B cell (primary cell): ENCODE measurements at regions of chr3 and their contacts with region 1.

Region 1: GRCh38 chr3:45656575-45657363 is 32.4 kb upstream of the SACM1L start:
- DNase-seq: peak; percentile 88
- ATAC-seq: peak; percentile 89
- H3K4me3 ChIP-seq: no peak overlapping the region
- H3K4me3 Mint-ChIP-seq: no peak overlapping the region
- H3K27ac ChIP-seq: no peak overlapping the region
- H3K27ac Mint-ChIP-seq: peak overlapping the region; percentile 53
- H3K4me1 ChIP-seq: peaks cover 20 to 21% of the 10 kb centered on the region in 2 donors
- H3K4me1 Mint-ChIP-seq: peaks cover 49% of the 10 kb centered on the region
- H3K27me3 ChIP-seq: no peaks in the 10 kb centered on the region
- H3K27me3 Mint-ChIP-seq: no peaks in the 10 kb centered on the region
- CTCF ChIP-seq: peak; percentile 91

Region 2: DNA sequence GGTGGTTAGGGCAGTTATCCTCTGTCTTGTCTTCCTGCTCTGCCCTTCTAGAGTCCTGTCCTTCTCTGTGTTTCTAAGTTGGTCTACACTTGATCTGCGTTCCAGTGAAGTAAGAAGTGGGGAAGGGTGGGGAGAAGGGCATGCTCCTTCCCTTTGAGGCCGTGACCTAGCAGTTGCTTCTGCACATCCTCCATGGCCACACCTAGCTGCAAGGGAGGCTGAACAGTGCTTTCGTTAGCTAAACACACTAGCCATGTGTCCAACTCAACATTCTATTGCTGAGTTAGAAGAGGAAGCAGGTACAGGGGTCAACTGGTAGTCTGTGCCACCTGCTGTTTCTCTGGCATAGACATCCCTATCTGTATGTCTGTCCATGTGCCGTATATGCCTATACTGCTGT is 173.9 kb before region 1 on chr3:
- CTCF ChIA-PET with region 1: no interaction called
- POLR2A ChIA-PET with region 1: no interaction called
- intact Hi-C with region 1: no loop called
- DNase-seq: no peak
- ATAC-seq: no peak
- H3K4me3 ChIP-seq: no peak overlapping the region
- H3K4me3 Mint-ChIP-seq: no peak overlapping the region
- H3K27ac ChIP-seq: no peak overlapping the region
- H3K27ac Mint-ChIP-seq: no peak overlapping the region
- H3K4me1 ChIP-seq: no peaks in the 10 kb centered on the region
- H3K4me1 Mint-ChIP-seq: no peaks in the 10 kb centered on the region
- H3K27me3 ChIP-seq: no peaks in the 10 kb centered on the region
- H3K27me3 Mint-ChIP-seq: no peaks in the 10 kb centered on the region
- CTCF ChIP-seq: no peak

Region 3: DNA sequence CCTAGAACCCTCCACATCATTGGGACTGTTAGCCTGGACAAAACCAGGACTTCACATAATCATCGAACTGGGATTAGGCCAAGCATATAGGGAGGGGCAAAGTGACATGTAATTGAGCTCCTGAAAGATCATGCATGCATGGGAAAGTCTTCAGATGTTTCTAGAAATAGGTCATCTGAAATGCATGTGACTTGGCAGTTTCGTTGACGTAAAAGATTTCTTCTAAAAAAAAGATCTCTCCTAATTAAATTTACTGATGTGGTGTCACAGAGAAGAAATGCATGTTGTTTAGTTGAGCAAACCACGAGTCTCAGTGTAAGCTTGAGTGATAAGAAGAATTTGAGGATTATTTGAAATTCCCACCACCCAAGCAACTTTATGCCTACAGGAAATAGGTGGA is 132.2 kb before region 1 on chr3:
- CTCF ChIA-PET with region 1: interaction called, 23 read pairs
- POLR2A ChIA-PET with region 1: no interaction called
- intact Hi-C with region 1: no loop called
- DNase-seq: no peak
- ATAC-seq: no peak
- H3K4me3 ChIP-seq: no peak overlapping the region
- H3K4me3 Mint-ChIP-seq: no peak overlapping the region
- H3K27ac ChIP-seq: no peak overlapping the region
- H3K27ac Mint-ChIP-seq: no peak overlapping the region
- H3K4me1 ChIP-seq: no peaks in the 10 kb centered on the region
- H3K4me1 Mint-ChIP-seq: no peaks in the 10 kb centered on the region
- H3K27me3 ChIP-seq: no peaks in the 10 kb centered on the region
- H3K27me3 Mint-ChIP-seq: no peaks in the 10 kb centered on the region
- CTCF ChIP-seq: no peak

Region 4: DNA sequence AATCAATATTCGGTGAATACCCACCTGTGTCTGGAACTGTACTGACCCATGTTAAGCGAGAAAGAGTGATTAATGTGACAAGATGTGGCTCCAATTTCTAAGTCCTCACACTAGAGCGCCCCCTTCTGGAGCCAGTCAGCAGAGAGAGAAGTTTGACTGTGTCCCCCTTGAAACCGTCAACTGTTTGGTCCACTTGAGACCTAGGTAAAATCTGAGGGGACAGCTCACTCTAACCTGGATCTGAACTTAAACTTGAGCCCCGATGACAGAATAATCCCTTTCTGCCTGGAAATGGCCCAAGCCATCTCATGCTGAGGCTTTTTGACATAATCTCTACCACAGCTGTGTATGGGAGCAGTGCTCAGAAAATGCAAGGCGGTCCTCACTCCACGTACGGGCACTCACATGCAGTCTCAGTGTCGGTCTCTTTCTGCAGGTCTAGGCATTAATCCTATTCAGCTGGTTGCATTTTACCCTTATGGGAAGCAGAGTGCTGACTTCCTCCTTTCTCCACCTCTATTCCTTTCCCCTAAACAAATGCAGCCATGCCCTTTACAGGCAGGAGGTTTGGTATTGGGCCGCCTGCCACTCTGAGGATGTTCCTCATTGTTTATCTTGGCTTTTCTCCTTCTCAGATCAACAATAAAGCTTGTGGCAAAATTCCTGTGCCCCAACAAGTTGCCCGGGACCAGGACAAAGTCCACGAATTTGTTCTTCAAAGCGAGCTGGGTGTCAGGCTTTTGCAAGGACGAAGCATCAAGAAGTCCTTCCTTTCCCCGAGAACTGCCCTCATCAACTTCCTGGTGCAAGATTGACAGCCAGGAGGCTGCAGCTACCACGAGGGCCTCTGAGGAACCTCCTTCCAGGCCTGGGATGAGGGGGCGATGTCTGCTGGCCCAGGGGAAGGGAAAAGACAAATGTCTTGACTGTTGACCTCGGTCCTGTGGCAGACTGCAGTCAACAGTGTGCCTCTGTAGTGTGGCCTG is 109.8 kb before region 1 on chr3:
- CTCF ChIA-PET with region 1: interaction called, 16 read pairs
- POLR2A ChIA-PET with region 1: interaction called, 4 read pairs
- intact Hi-C with region 1: no loop called
- DNase-seq: peak; percentile 20
- ATAC-seq: no peak
- H3K4me3 ChIP-seq: no peak overlapping the region
- H3K4me3 Mint-ChIP-seq: no peak overlapping the region
- H3K27ac ChIP-seq: no peak overlapping the region
- H3K27ac Mint-ChIP-seq: no peak overlapping the region
- H3K4me1 ChIP-seq: peaks cover 0 to 11% of the 10 kb centered on the region in 2 donors
- H3K4me1 Mint-ChIP-seq: peaks cover 13% of the 10 kb centered on the region
- H3K27me3 ChIP-seq: no peaks in the 10 kb centered on the region
- H3K27me3 Mint-ChIP-seq: no peaks in the 10 kb centered on the region
- CTCF ChIP-seq: peak; percentile 19

Region 5: DNA sequence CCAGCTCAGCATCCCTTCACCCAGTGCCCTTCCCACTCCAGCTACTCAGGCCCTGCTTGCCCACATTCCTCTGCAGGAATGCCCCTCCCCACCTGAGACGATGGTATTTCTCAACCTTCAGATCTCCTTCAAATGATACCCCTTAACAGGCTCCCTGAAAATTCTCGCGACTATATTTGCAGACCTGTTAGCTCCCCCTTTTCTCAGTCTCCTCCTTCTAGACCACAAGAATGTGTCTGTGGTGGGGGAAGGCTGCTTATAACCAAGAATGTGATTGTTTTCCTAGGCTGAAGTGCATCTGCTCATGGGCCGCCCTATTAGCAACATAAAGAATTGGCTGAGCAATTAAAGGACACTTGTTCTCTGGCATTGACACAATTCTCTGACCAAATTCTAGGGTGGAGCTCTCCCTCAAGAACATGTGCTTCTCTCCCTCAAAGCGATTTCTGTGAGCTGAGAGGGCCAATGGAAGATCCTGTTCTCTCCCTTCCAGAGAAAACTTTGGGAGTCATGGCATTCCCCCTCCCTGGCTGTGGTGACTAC is 81.3 kb before region 1 on chr3:
- CTCF ChIA-PET with region 1: interaction called, 21 read pairs
- POLR2A ChIA-PET with region 1: interaction called, 10 read pairs
- intact Hi-C with region 1: no loop called
- DNase-seq: no peak
- ATAC-seq: no peak
- H3K4me3 ChIP-seq: no peak overlapping the region
- H3K4me3 Mint-ChIP-seq: no peak overlapping the region
- H3K27ac ChIP-seq: no peak overlapping the region
- H3K27ac Mint-ChIP-seq: no peak overlapping the region
- H3K4me1 ChIP-seq: peaks cover 0 to 8% of the 10 kb centered on the region in 2 donors
- H3K4me1 Mint-ChIP-seq: peaks cover 4% of the 10 kb centered on the region
- H3K27me3 ChIP-seq: no peaks in the 10 kb centered on the region
- H3K27me3 Mint-ChIP-seq: no peaks in the 10 kb centered on the region
- CTCF ChIP-seq: no peak

Region 6: DNA sequence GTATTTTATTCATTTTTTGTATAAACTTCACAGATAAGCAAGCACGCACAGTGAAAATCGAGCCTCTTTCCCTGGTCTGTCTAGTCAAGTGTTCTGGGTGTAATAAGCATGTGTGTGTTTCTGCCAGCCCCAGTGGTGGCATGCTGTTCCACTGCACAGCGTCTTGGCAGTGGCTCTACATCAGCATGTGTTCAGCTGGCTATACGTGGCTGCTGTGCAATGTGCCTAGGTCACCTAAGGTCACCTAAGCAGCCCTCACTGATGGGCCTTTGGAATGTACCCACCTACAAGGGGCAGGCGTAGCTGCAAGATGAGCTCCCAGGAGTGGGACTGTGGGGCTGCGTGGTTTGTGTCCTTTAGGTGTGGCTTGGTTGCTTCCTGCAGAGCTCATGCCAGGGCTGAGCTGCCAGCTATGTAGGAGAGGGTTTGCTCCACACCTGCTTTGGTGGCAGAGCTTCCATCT is 57.3 kb before region 1 on chr3:
- CTCF ChIA-PET with region 1: interaction called, 75 read pairs
- POLR2A ChIA-PET with region 1: interaction called, 7 read pairs
- intact Hi-C with region 1: no loop called
- DNase-seq: no peak
- ATAC-seq: no peak
- H3K4me3 ChIP-seq: peak overlapping the region in 2 of 5 experiments; percentile 8 to 13
- H3K4me3 Mint-ChIP-seq: peak overlapping the region; percentile 79
- H3K27ac ChIP-seq: peak overlapping the region; percentile 3 to 65
- H3K27ac Mint-ChIP-seq: peak overlapping the region; percentile 84
- H3K4me1 ChIP-seq: peaks cover 56 to 82% of the 10 kb centered on the region in 2 donors
- H3K4me1 Mint-ChIP-seq: peaks cover 86% of the 10 kb centered on the region
- H3K27me3 ChIP-seq: no peaks in the 10 kb centered on the region
- H3K27me3 Mint-ChIP-seq: no peaks in the 10 kb centered on the region
- CTCF ChIP-seq: no peak

Region 7: GRCh38 chr3:45688882-45689756 is 32.4 kb after region 1 on chr3 and contains the start of gene SACM1L:
- CTCF ChIA-PET with region 1: interaction called, 10 read pairs
- POLR2A ChIA-PET with region 1: no interaction called
- intact Hi-C with region 1: no loop called
- DNase-seq: peak; percentile 99
- ATAC-seq: peak; percentile 85
- H3K4me3 ChIP-seq: peak within 1 kb of the TSS; percentile 69 to 96 (median 82)
- H3K4me3 Mint-ChIP-seq: peak within 1 kb of the TSS; percentile 93
- H3K27ac ChIP-seq: peak within 1 kb of the TSS; percentile 75 to 85
- H3K27ac Mint-ChIP-seq: peak within 1 kb of the TSS; percentile 99
- H3K4me1 ChIP-seq: peaks cover 38 to 44% of the 10 kb centered on the region in 2 donors
- H3K4me1 Mint-ChIP-seq: peaks cover 55% of the 10 kb centered on the region
- H3K27me3 ChIP-seq: no peaks in the 10 kb centered on the region
- H3K27me3 Mint-ChIP-seq: peaks cover 3% of the 10 kb centered on the region
- CTCF ChIP-seq: no peak
- total RNA-seq, gene SACM1L: 85.7 and 88.2 TPM in 2 replicates

Region 8: GRCh38 chr3:45783667-45784066 is 126.9 kb after region 1 on chr3:
- CTCF ChIA-PET with region 1: no interaction called
- POLR2A ChIA-PET with region 1: no interaction called
- intact Hi-C with region 1: no loop called
- DNase-seq: no peak
- ATAC-seq: no peak
- H3K4me3 ChIP-seq: no peak overlapping the region
- H3K4me3 Mint-ChIP-seq: no peak overlapping the region
- H3K27ac ChIP-seq: no peak overlapping the region
- H3K27ac Mint-ChIP-seq: no peak overlapping the region
- H3K4me1 ChIP-seq: no peaks in the 10 kb centered on the region
- H3K4me1 Mint-ChIP-seq: no peaks in the 10 kb centered on the region
- H3K27me3 ChIP-seq: no peaks in the 10 kb centered on the region
- H3K27me3 Mint-ChIP-seq: peaks cover 5% of the 10 kb centered on the region
- CTCF ChIP-seq: no peak